CD8-positive, alpha-beta memory T cell (primary cell): ENCODE measurements at regions of chr6 and their contacts with region 1.

Region 1: GRCh38 chr6:56890683-56891429 is 64.1 kb upstream of the BEND6 start:
- DNase-seq: no peak
- H3K4me3 ChIP-seq: no peak overlapping the region
- H3K4me3 Mint-ChIP-seq: no peak overlapping the region
- H3K27ac ChIP-seq: no peak overlapping the region
- H3K27ac Mint-ChIP-seq: peak overlapping the region in 2 of 8 donors; percentile 28 to 87
- H3K4me1 ChIP-seq: peaks cover 3% of the 10 kb centered on the region
- H3K4me1 Mint-ChIP-seq: peaks cover 0 to 12% (median 3%) of the 10 kb centered on the region in 3 donors
- H3K27me3 ChIP-seq: no peaks in the 10 kb centered on the region
- H3K27me3 Mint-ChIP-seq: no peaks in the 10 kb centered on the region

Region 2: GRCh38 chr6:56902641-56903464 is 12.0 kb after region 1 on chr6:
- CTCF ChIA-PET with region 1: interaction called, 20 read pairs
- POLR2A ChIA-PET with region 1: no interaction called
- DNase-seq: peak in 2 of 5 donors; percentile 17 to 35
- H3K4me3 ChIP-seq: no peak overlapping the region
- H3K4me3 Mint-ChIP-seq: no peak overlapping the region
- H3K27ac ChIP-seq: no peak overlapping the region
- H3K27ac Mint-ChIP-seq: no peak overlapping the region
- H3K4me1 ChIP-seq: no peaks in the 10 kb centered on the region
- H3K4me1 Mint-ChIP-seq: no peaks in the 10 kb centered on the region
- H3K27me3 ChIP-seq: no peaks in the 10 kb centered on the region
- H3K27me3 Mint-ChIP-seq: peaks cover 3 to 14% of the 10 kb centered on the region in 2 donors